Cardiac septum (tissue), 1 donor: ENCODE measurements at regions of chr3 and their contacts with region 1.

Region 1: GRCh38 chr3:43690400-43691119 is at the start of gene ABHD5:
- DNase-seq: peak; percentile 96
- total RNA-seq, gene ABHD5: 23.5 TPM

Region 2: GRCh38 chr3:43285644-43286043 is 404.9 kb before region 1 on chr3:
- intact Hi-C with region 1: no loop called
- DNase-seq: no peak

Region 3: DNA sequence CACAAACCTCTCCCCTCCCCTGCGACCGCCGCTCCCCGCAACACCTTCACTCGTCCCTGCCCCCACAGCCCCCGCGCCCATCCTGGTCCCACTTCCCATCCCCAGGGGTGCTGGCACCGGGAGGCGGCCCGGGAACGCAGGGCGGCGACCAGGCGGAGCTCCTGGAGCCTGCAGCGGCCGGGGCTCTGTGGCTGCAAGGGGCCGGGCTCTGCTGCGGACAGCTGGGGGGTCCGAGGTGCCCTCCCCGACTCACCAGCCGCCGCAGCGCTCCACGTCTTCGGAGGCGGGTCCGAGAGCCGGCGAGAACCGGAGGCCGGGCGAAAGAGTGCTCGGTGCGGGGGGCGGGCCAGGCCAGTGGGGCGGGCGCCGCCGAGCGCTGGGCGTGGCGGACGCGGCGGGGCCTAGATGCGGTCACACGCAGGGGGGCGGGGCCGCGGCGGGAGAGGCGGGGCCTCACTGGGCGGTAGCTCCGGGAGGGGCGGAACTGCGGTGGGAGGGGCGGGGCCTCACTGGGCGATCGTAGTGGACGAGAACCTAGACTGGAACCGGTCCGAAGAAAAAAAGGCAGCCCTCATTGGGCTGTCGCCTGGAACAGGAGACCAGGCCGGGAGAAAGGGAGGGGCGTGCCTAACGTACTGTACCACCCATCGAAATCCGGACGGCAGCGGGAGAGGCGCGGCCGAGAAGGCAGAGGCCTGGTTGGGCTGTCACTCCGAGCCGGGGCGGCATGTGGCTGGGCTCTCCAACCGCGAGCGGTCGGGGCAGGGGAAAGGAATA is 68.7 kb before region 1 on chr3 and contains the start of gene ANO10:
- intact Hi-C with region 1: loop called (anchors 2 kb)
- DNase-seq: peak; percentile 100
- total RNA-seq, gene ANO10: 15.3 TPM

Region 4: DNA sequence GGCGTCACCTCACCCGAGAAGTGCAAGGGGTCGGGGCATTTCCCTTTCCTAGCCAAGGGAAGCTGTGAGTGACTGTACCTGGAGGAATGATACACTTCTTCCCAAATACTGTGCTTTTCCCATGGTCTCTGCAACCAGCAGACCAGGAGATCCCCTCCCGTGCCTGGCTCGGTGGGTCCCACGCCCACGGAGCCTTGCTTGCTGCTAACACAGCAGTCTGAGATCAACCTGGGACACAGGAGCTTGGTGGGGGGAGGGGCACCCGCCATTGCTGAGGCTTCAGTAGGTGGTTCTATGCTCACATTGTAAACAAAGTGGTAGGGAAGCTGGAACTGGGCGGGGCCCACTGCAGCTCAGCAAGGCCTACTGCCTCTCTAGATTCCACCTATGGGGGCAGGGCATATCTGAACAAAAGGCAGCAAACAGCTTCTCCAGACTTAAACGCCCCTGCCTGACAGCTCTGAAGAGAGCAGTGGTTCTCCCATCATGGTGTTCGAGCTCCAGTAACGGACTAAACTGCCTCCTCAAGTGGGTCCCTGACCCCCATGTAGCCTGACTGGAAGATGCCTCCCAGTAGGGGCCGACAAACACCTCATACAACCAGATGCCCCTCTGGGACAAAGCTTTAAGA is 31.2 kb before region 1 on chr3:
- intact Hi-C with region 1: no loop called
- DNase-seq: no peak

Region 5: GRCh38 chr3:43733459-43734384 is 43.2 kb after region 1 on chr3:
- intact Hi-C with region 1: loop called (anchors 5 kb)
- DNase-seq: no peak

Region 6: DNA sequence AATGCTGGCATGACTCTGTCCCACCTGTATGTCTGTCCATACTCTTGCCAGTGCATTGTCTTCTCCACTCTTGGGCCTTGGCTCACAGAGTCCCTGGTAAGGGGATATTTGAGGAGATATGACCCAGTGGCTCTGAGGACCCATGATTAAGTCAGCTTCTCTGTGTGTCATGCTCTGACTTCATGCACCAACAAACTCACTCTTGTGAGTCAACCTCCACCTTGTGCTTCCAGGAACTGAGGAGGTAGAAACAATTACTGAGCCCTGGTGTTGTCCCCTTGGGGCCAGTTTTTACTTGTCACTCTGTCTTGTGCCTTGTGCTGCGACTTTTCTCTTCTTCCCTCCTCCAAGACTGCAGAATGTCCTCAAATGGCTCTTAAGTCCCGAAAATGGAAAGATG is 127.3 kb after region 1 on chr3:
- intact Hi-C with region 1: no loop called
- DNase-seq: no peak

Region 7: DNA sequence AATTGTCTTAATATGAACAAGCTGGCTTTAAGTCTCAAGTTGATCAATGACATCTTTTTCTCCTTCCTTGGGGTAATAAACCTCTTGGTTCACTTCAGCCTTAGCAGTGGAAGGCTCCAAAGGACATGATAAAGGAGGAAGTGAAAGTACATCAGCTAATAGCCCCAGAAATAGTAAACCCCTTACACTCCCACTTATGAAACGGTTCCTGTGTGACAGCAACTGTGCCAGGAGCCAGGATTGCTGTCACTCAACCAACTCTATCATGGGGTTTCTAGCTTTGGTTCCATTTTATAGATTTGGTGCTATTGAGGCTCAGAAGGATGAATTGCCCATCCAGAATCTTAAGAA is 216.9 kb after region 1 on chr3:
- intact Hi-C with region 1: no loop called
- DNase-seq: no peak